Esophagus squamous epithelium (tissue), 5 donors: ENCODE measurements at regions of chr4 and their contacts with region 1.

Region 1: DNA sequence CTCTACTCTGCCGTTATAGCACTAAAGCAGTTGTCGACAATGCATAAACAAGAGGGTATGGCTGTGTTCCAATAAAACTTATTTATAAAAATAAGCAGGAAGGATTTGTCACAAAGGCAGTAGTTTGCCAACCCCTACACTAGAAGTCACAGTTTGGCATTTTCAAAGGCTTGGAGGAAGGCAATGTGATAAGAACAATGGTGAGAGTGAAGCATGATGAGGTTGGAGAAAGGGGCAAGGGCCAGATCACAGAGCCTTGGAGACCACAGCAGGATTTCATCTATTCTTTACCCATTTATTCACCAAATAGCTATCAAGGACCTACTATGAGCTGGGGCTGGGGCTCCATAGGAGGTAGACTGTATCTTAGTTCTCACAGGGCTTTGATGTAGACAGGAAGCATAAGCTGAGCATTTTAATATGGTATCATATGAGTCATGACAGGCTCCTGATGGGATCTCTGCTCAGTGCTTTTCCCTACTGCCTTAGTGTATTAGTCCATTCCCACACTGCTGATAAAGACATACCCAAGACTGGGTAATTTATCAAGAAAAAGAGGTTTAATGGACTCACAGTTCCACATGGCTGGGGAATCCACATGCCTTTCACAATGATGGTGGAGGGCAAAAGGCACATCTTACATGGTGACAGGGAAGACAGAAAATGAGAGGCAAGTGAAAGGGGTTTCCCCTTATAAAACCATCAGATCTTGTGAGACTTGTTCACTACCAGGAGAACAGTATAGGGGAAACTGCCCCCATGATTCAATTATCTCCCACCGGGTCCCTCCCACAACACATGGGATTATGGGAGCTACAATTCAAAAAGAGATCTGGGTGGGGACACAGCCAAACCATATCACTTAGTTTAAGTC is 58.9 kb downstream of the PPM1K start:
- DNase-seq: no peak
- H3K4me3 ChIP-seq: no peak overlapping the region
- H3K27ac ChIP-seq: peak overlapping the region in 2 of 4 donors; percentile 9 to 66
- H3K4me1 ChIP-seq: peaks cover 0 to 23% (median 7%) of the 10 kb centered on the region in 3 donors
- H3K27me3 ChIP-seq: no peaks in the 10 kb centered on the region
- CTCF ChIP-seq: no peak
- POLR2A ChIP-seq: no peak

Region 2: GRCh38 chr4:88341227-88342192 is 116.0 kb after region 1 on chr4:
- intact Hi-C with region 1: no loop called
- DNase-seq: no peak
- H3K4me3 ChIP-seq: no peak overlapping the region
- H3K27ac ChIP-seq: peak overlapping the region in 2 of 4 donors; percentile 7 to 55
- H3K4me1 ChIP-seq: peaks cover 0 to 34% (median 0%) of the 10 kb centered on the region in 3 donors
- H3K27me3 ChIP-seq: no peaks in the 10 kb centered on the region
- CTCF ChIP-seq: no peak
- POLR2A ChIP-seq: no peak

Region 3: GRCh38 chr4:88352062-88352740 is 126.7 kb after region 1 on chr4:
- intact Hi-C with region 1: loop called (anchors 10 kb)
- DNase-seq: no peak
- H3K4me3 ChIP-seq: no peak overlapping the region
- H3K27ac ChIP-seq: peak overlapping the region in 1 of 4 donors; percentile 52
- H3K4me1 ChIP-seq: peaks cover 0 to 12% (median 0%) of the 10 kb centered on the region in 3 donors
- H3K27me3 ChIP-seq: no peaks in the 10 kb centered on the region
- CTCF ChIP-seq: no peak
- POLR2A ChIP-seq: no peak

Region 4: GRCh38 chr4:88419874-88420273 is 194.4 kb after region 1 on chr4:
- intact Hi-C with region 1: no loop called
- DNase-seq: no peak
- H3K4me3 ChIP-seq: no peak overlapping the region
- H3K27ac ChIP-seq: no peak overlapping the region
- H3K4me1 ChIP-seq: no peaks in the 10 kb centered on the region
- H3K27me3 ChIP-seq: no peaks in the 10 kb centered on the region
- CTCF ChIP-seq: no peak
- POLR2A ChIP-seq: no peak

Region 5: DNA sequence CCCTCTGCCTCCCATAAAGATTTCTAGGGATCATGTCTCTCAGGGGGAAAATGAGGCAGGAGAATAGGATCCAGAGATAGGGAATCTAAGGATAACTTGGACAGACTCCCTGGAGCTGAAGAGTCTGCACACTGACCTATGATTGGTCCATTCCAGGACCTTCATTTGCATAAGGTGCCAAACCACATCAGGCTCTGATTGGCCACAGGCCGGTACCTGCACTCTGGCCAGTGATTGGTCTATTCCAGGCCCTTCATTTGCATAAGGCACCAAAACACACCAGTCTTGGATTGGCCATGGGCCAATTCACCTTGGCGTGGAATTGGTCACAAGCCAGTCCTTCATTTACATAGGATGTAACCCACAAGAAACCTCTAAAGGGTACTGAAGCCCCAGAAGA is 227.4 kb after region 1 on chr4:
- intact Hi-C with region 1: loop called (anchors 5 kb)
- DNase-seq: no peak
- H3K4me3 ChIP-seq: no peak overlapping the region
- H3K27ac ChIP-seq: no peak overlapping the region
- H3K4me1 ChIP-seq: peaks cover 4 to 19% (median 4%) of the 10 kb centered on the region in 3 donors
- H3K27me3 ChIP-seq: peaks cover 0 to 6% (median 0%) of the 10 kb centered on the region in 4 donors
- CTCF ChIP-seq: no peak
- POLR2A ChIP-seq: no peak